Psoas muscle (tissue), 8 donors: ENCODE measurements at regions of chr14 and their contacts with region 1.

Region 1: GRCh38 chr14:64444984-64445845 is 20.1 kb upstream of the AKAP5 start:
- DNase-seq: no peak
- ATAC-seq: peak in 1 of 4 donors; percentile 10
- H3K4me3 ChIP-seq: no peak overlapping the region
- H3K27ac ChIP-seq: peak overlapping the region; percentile 30
- H3K4me1 ChIP-seq: no peaks in the 10 kb centered on the region
- H3K27me3 ChIP-seq: no peaks in the 10 kb centered on the region
- CTCF ChIP-seq: no peak

Region 2: DNA sequence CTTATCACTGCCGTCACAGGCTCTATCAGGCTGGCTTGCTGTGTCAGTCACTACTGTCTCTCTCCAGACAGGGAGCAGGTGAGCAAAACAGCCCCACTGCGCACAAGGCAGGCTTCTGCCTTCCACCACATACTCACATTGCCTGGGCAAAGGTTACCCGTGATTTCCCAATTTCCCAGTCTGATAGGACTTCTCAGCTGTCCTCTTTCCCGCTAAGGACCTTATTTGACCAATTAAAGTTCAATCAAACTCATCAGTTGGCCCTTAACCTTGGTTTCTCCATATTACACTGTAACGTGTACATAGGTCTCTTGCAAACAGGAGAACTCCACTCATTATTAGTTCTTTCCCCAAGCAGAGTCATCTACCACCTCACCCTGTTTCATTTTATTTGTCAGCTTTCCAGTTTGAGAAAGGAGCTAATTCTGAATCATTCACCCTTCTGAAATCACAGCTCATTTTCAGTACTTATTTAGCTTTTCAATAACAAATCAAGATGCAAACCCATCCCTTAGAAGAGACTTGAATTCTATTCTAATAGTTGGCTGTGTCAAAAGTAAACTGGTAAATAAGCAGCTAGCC is 321.9 kb before region 1 on chr14:
- intact Hi-C with region 1: loop called in 1 of 2 experiments (anchors 10 kb)
- DNase-seq: no peak
- ATAC-seq: no peak
- H3K4me3 ChIP-seq: no peak overlapping the region
- H3K27ac ChIP-seq: no peak overlapping the region
- H3K4me1 ChIP-seq: peaks cover 18% of the 10 kb centered on the region
- H3K27me3 ChIP-seq: no peaks in the 10 kb centered on the region
- CTCF ChIP-seq: no peak

Region 3: GRCh38 chr14:64654246-64654900 is 209.2 kb after region 1 on chr14:
- intact Hi-C with region 1: no loop called
- DNase-seq: no peak
- ATAC-seq: peak; percentile 36 to 59 (median 46)
- H3K4me3 ChIP-seq: no peak overlapping the region
- H3K27ac ChIP-seq: peak overlapping the region; percentile 53
- H3K4me1 ChIP-seq: no peaks in the 10 kb centered on the region
- H3K27me3 ChIP-seq: no peaks in the 10 kb centered on the region
- CTCF ChIP-seq: no peak

Region 4: DNA sequence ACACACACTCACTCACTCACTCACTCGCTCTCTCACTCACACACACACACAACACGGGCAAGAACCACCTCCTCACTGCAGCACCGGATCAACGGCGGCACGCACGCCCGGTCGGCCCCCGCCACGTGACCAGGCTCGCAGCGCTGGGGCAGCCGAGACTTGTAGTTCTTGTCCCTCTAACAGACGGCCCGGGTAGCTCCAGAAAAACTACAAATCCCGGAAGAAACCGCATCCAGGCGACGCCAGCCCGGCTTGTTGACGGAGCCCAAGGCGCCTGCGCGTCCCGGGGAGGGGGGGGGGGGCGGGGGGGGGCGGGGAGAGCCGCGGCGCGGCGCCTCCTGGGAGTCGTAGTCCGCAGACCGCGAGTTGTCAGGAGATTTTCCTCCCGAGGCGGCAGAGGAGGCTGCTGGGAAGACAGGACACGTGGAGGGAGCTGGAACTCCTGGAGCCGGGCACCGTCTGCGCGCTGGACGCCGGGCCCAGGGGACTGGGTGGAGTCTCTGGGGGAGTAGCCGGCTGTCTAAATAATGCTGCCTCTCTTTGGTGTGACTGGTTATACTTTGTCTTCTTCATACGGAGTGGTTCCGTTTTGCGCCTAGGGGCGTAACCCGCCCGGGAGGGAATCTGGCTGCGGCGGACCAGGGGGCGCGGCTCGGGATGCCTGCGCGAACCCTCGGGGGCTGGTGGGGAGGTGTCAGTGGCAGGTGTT is 657.4 kb after region 1 on chr14 and contains the start of gene MAX:
- intact Hi-C with region 1: no loop called
- DNase-seq: peak; percentile 98 to 99
- ATAC-seq: peak; percentile 94 to 95 (median 94)
- H3K4me3 ChIP-seq: peak within 1 kb of the TSS; percentile 94
- H3K27ac ChIP-seq: peak within 1 kb of the TSS; percentile 93
- H3K4me1 ChIP-seq: peaks cover 39% of the 10 kb centered on the region
- H3K27me3 ChIP-seq: no peaks in the 10 kb centered on the region
- CTCF ChIP-seq: no peak
- total RNA-seq, gene MAX: 44.7 to 115 (median 55.9) TPM